ENCODE measurements at regions of chr3 and their contacts with region 1.

Region 1: DNA sequence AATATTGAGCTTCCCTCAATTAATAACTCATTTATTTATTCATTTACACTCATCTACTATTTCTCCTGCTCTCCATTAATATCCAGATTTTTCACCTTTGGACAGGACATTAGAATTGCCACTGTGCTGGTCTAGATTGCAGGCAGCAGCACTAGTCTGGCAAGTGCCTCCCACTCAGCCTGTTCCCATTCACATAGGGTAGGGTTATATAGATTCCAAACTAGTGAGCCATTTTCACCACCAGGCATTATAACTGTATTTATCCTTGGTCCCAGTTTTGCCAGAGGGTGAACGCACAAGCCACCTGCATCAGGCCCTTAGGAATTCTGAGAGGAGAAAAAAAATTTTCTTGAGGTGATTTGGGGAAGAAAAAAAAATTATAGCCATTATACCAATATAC is 44.5 kb downstream of the ANAPC13 start:
- DNase-seq: no peak
- H3K4me3 ChIP-seq: no peak overlapping the region
- H3K27ac ChIP-seq: no peak overlapping the region
- H3K4me1 ChIP-seq: no peaks in the 10 kb centered on the region
- H3K27me3 ChIP-seq: no peaks in the 10 kb centered on the region
- CTCF ChIP-seq: no peak
- POLR2A ChIP-seq: no peak

Region 2: DNA sequence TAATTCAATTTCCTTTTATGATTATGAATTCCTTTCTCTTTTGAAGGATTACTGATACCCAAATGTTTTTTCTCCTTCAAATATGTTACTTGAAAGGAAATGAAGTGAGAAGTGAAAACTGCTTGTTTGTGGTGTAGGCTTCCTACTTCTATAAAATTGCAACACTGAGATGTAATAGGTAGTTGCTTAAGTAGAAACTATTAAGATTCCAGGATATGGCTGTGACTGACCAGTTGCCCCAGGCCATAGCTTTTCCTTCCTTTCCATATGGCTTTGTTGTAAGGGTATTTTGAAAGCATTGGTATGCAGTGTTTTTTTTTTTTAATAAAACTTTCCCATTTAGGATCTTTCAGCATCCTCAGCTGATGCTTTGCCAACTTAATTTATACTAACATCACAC is 1995.5 kb before region 1 on chr3:
- intact Hi-C with region 1: loop called (anchors 5 kb)
- DNase-seq: no peak
- H3K4me3 ChIP-seq: no peak overlapping the region
- H3K27ac ChIP-seq: no peak overlapping the region
- H3K4me1 ChIP-seq: peaks cover 3 to 7% of the 10 kb centered on the region in 2 donors
- H3K27me3 ChIP-seq: no peaks in the 10 kb centered on the region
- CTCF ChIP-seq: no peak
- POLR2A ChIP-seq: no peak

Region 3: GRCh38 chr3:134516905-134517304 is 75.6 kb after region 1 on chr3:
- intact Hi-C with region 1: no loop called
- DNase-seq: no peak
- H3K4me3 ChIP-seq: no peak overlapping the region
- H3K27ac ChIP-seq: no peak overlapping the region
- H3K4me1 ChIP-seq: no peaks in the 10 kb centered on the region
- H3K27me3 ChIP-seq: no peaks in the 10 kb centered on the region
- CTCF ChIP-seq: no peak
- POLR2A ChIP-seq: no peak